ENCODE measurements at regions of chr19 and their contacts with region 1.

Region 1: DNA sequence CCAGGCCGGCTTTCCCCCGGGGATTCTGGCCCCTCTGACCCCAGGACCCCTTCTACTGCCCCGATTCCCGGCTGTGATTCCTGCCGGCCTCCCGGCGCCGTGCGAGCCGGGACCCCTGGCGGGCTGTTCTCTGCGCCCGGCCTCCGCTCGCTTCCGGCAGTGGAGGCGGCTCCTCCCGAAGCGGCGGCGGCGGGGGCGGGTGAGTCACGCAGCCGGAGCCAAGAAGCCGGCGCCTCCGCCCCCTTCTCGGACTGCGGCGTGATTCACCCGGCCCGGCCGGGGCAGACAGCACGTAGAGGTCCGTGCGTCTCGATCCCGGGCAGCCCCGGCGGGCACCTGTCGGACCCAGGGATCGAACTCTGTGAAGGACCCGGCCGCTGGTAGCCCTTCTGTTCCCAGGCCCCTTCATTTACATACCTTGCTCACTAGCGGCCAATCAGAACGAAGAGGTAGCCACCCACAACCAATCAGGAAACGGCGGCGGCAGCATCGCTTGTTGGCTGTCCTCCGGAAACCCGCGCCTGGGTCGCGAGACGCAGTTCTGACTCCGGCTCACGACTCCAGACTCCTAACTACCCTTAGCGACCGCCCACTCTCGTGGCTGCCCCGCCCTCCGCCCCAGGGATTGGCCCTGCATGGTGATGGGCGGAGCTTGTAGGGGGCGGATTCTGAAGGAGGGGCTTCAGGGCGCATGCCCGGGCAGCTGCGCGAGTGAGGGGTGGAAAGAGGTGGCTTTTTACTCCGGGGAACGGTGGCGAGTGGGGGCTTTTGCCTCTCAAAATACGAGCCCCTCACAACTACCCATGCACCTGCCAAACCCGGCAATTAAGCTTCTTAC is at the start of gene SERTAD1:
- DNase-seq: peak; percentile 100
- ATAC-seq: peak; percentile 91
- H3K4me3 Mint-ChIP-seq: peak within 1 kb of the TSS; percentile 89
- H3K27ac Mint-ChIP-seq: peak within 1 kb of the TSS; percentile 96
- H3K4me1 Mint-ChIP-seq: peaks cover 20% of the 10 kb centered on the region
- H3K27me3 Mint-ChIP-seq: no peaks in the 10 kb centered on the region
- total RNA-seq, gene SERTAD1: 10.0 to 14.7 TPM

Region 2: GRCh38 chr19:40305403-40305802 is 120.3 kb before region 1 on chr19:
- CTCF ChIA-PET with region 1: interaction called, 6 read pairs
- POLR2A ChIA-PET with region 1: no interaction called
- intact Hi-C with region 1: loop called in 1 of 2 experiments (anchors 2 kb)
- DNase-seq: peak; percentile 90
- ATAC-seq: peak; percentile 83
- H3K4me3 Mint-ChIP-seq: no peak overlapping the region
- H3K27ac Mint-ChIP-seq: no peak overlapping the region
- H3K4me1 Mint-ChIP-seq: no peaks in the 10 kb centered on the region
- H3K27me3 Mint-ChIP-seq: no peaks in the 10 kb centered on the region

Region 3: GRCh38 chr19:40465557-40466150 is 40.0 kb after region 1 on chr19 and contains the start of gene BLVRB:
- CTCF ChIA-PET with region 1: interaction called, 14 read pairs
- POLR2A ChIA-PET with region 1: interaction called, 7 read pairs
- intact Hi-C with region 1: loop called (anchors 1 kb)
- DNase-seq: peak; percentile 100
- ATAC-seq: peak; percentile 84
- H3K4me3 Mint-ChIP-seq: peak within 1 kb of the TSS; percentile 77
- H3K27ac Mint-ChIP-seq: peak within 1 kb of the TSS; percentile 87
- H3K4me1 Mint-ChIP-seq: peaks cover 30% of the 10 kb centered on the region
- H3K27me3 Mint-ChIP-seq: peaks cover 11% of the 10 kb centered on the region
- total RNA-seq, gene BLVRB: 34.1 to 35.6 TPM

Region 4: GRCh38 chr19:40529093-40529954 is 103.7 kb after region 1 on chr19:
- CTCF ChIA-PET with region 1: no interaction called
- POLR2A ChIA-PET with region 1: no interaction called
- intact Hi-C with region 1: loop called in 1 of 2 experiments (anchors 2 kb)
- DNase-seq: peak; percentile 95
- ATAC-seq: peak; percentile 75
- H3K4me3 Mint-ChIP-seq: peak overlapping the region; percentile 47
- H3K27ac Mint-ChIP-seq: no peak overlapping the region
- H3K4me1 Mint-ChIP-seq: peaks cover 11% of the 10 kb centered on the region
- H3K27me3 Mint-ChIP-seq: peaks cover 19% of the 10 kb centered on the region

Region 5: DNA sequence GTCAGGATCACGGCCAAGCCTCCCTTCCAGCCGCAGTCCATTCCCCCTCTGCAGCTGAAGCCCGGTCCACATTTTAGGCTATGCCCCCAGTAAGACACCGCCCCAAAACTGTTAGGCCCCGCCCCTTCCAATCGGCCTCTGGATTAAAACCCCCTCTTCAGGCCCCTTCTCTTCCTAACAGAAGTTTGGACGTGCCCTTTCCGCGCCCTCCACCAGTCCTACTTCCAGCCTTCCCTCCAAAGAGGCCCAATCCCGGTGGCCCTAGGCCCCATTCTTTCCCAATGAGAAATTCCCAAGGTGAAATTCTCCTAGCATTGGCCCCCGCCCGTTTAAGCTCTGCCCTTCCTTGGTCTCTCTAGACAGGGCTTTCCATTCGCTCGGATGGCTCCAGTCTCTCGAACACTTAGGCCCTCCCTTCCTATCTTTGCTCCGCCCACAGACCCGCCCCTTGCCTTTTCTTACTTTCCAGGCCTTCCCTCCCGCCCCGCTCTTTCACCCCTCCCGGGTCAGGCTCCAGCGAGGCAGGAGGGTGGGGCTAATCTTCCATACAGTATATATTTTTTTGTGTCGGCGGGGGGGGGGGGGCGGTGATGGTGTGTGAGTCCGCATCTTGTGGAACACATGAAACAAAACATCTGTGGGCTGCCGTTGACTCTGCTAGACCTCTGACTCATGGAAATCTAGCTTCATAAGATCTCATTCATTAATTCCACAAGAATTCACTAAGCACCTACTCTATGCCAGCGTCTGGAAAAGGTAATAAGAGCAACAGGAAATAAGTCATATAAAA is 189.1 kb after region 1 on chr19:
- CTCF ChIA-PET with region 1: no interaction called
- POLR2A ChIA-PET with region 1: interaction called, 4 read pairs
- intact Hi-C with region 1: loop called in 1 of 2 experiments (anchors 1 kb)
- DNase-seq: peak; percentile 98
- ATAC-seq: peak; percentile 55
- H3K4me3 Mint-ChIP-seq: peak overlapping the region; percentile 99
- H3K27ac Mint-ChIP-seq: peak overlapping the region; percentile 100
- H3K4me1 Mint-ChIP-seq: peaks cover 58% of the 10 kb centered on the region
- H3K27me3 Mint-ChIP-seq: no peaks in the 10 kb centered on the region

Region 6: DNA sequence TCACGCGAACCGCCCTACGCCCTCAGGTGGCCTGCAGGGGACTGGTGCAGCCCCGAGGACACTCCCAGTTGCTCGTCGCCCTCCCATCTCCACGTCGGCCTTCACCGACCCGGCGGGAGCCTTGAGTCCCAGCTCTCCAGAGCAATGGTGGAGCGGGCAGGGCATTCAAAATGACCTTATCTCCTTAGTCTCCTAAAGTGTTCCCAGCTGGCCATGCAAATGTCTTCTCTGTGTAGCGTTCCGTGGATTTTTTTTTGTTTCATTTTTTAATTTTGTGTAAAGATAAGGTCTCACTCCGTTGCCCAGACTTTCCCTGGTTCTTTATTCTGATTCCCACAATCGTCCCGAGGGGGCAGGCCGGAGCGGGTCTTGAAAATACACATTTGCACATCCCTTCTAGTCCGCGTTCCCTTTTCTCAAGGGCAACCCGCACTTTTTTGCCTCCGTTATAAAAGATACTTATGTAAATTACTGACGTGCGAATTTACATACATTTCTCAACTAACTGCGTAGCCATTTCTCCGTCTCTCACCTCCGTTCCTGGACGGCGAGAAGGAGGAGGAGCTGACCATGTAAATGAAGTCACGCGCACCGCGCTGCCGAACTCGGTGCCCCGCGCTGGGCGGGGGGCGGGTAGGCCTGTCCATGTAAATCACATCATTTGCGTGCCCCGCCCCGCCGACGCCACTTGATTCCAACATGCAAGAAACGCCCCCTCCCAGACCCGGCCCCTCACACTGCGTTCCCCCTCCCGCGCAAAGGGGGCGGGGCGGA is 372.7 kb after region 1 on chr19:
- CTCF ChIA-PET with region 1: interaction called, 5 read pairs
- POLR2A ChIA-PET with region 1: no interaction called
- intact Hi-C with region 1: loop called in 1 of 2 experiments (anchors 5 kb)
- DNase-seq: peak; percentile 100
- ATAC-seq: peak; percentile 82
- H3K4me3 Mint-ChIP-seq: peak overlapping the region; percentile 91
- H3K27ac Mint-ChIP-seq: peak overlapping the region; percentile 97
- H3K4me1 Mint-ChIP-seq: peaks cover 49% of the 10 kb centered on the region
- H3K27me3 Mint-ChIP-seq: no peaks in the 10 kb centered on the region

Region 7: GRCh38 chr19:40889366-40889765 is 463.7 kb after region 1 on chr19:
- CTCF ChIA-PET with region 1: no interaction called
- POLR2A ChIA-PET with region 1: no interaction called
- intact Hi-C with region 1: no loop called
- DNase-seq: no peak
- ATAC-seq: no peak
- H3K4me3 Mint-ChIP-seq: no peak overlapping the region
- H3K27ac Mint-ChIP-seq: no peak overlapping the region
- H3K4me1 Mint-ChIP-seq: no peaks in the 10 kb centered on the region
- H3K27me3 Mint-ChIP-seq: peaks cover 15% of the 10 kb centered on the region

Measured in activated CD4-positive, alpha-beta T cell treated with anti-CD3 and anti-CD28 coated beads for 36 hours (primary cell).